CD4-positive, alpha-beta memory T cell (primary cell): ENCODE measurements at regions of chr16 and their contacts with region 1.

Region 1: DNA sequence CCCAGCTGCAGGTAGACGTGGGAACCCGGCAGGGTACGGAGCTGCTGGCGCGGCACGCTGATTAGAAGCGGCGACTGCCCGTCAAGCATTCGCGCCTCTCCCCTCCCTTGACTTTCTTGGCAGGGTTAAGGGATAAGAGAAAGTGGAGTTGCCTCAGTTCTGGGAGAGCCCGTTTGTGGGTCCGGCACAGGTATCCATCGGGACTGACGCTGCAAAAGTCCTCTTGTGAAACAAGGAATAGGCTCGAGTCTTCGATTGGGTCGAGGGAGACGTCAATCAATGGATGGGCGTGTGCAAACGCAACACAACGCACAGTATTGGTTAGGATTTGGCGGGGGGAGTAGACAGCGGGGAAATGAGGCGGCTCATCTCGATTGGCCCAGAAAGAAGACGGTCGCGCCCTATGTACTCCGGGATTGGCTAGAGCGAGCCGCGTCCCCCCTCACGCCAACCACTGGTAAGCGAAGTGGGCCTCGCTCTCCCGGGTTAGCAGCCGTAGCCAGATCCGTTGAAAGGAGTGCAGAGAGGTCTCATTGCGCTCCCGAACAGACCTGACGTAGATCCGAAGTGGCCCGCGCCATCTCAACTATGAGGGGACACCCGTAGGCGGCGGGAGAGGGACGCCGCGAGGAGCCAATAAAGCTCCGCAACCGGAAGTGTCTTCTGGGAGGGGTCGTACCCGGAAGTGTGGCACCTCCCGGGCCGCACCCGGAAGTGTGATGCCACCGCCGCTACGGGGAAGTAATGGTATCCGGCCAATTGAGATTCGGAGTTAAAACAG is at the start of gene MON1B:
- DNase-seq: peak; percentile 97 to 98 (median 98)
- H3K4me3 ChIP-seq: peak within 1 kb of the TSS; percentile 97 to 99
- H3K4me3 Mint-ChIP-seq: peak within 1 kb of the TSS; percentile 94 to 100 (median 98)
- H3K27ac ChIP-seq: peak within 1 kb of the TSS; percentile 93
- H3K27ac Mint-ChIP-seq: peak within 1 kb of the TSS; percentile 98 to 100 (median 99)
- H3K4me1 ChIP-seq: peaks cover 27% of the 10 kb centered on the region
- H3K4me1 Mint-ChIP-seq: peaks cover 31 to 50% (median 38%) of the 10 kb centered on the region in 4 donors
- H3K27me3 ChIP-seq: no peaks in the 10 kb centered on the region
- H3K27me3 Mint-ChIP-seq: no peaks in the 10 kb centered on the region
- total RNA-seq, gene MON1B: 82.4 to 85.4 TPM

Region 2: GRCh38 chr16:75555707-75556430 is 1634.8 kb before region 1 on chr16 and contains the start of gene TMEM231:
- CTCF ChIA-PET with region 1: no interaction called
- POLR2A ChIA-PET with region 1: no interaction called
- intact Hi-C with region 1: loop called (anchors 2 kb)
- DNase-seq: peak; percentile 94 to 98 (median 96)
- H3K4me3 ChIP-seq: peak within 1 kb of the TSS; percentile 75 to 76
- H3K4me3 Mint-ChIP-seq: peak within 1 kb of the TSS; percentile 87 to 95 (median 90)
- H3K27ac ChIP-seq: peak within 1 kb of the TSS; percentile 68
- H3K27ac Mint-ChIP-seq: peak within 1 kb of the TSS; percentile 89 to 98 (median 95)
- H3K4me1 ChIP-seq: peaks cover 15% of the 10 kb centered on the region
- H3K4me1 Mint-ChIP-seq: peaks cover 3 to 16% (median 10%) of the 10 kb centered on the region in 4 donors
- H3K27me3 ChIP-seq: no peaks in the 10 kb centered on the region
- H3K27me3 Mint-ChIP-seq: peaks cover 0 to 1% of the 10 kb centered on the region in 2 donors
- total RNA-seq, gene TMEM231: 2.4 to 2.6 TPM

Region 3: GRCh38 chr16:76900285-76901263 is 290.1 kb before region 1 on chr16:
- CTCF ChIA-PET with region 1: no interaction called
- POLR2A ChIA-PET with region 1: no interaction called
- intact Hi-C with region 1: no loop called
- DNase-seq: no peak
- H3K4me3 ChIP-seq: no peak overlapping the region
- H3K4me3 Mint-ChIP-seq: no peak overlapping the region
- H3K27ac ChIP-seq: no peak overlapping the region
- H3K27ac Mint-ChIP-seq: no peak overlapping the region
- H3K4me1 ChIP-seq: no peaks in the 10 kb centered on the region
- H3K4me1 Mint-ChIP-seq: no peaks in the 10 kb centered on the region
- H3K27me3 ChIP-seq: no peaks in the 10 kb centered on the region
- H3K27me3 Mint-ChIP-seq: no peaks in the 10 kb centered on the region

Region 4: GRCh38 chr16:77211880-77212740 is 21.4 kb after region 1 on chr16:
- CTCF ChIA-PET with region 1: no interaction called
- POLR2A ChIA-PET with region 1: interaction called, 27 read pairs
- intact Hi-C with region 1: loop called (anchors 1 kb)
- DNase-seq: peak; percentile 71 to 86 (median 74)
- H3K4me3 ChIP-seq: peak overlapping the region; percentile 17 to 66
- H3K4me3 Mint-ChIP-seq: peak overlapping the region; percentile 84 to 92 (median 88)
- H3K27ac ChIP-seq: peak overlapping the region; percentile 61
- H3K27ac Mint-ChIP-seq: peak overlapping the region; percentile 78 to 90 (median 88)
- H3K4me1 ChIP-seq: peaks cover 5% of the 10 kb centered on the region
- H3K4me1 Mint-ChIP-seq: peaks cover 8 to 16% (median 13%) of the 10 kb centered on the region in 4 donors
- H3K27me3 ChIP-seq: no peaks in the 10 kb centered on the region
- H3K27me3 Mint-ChIP-seq: no peaks in the 10 kb centered on the region

Region 5: DNA sequence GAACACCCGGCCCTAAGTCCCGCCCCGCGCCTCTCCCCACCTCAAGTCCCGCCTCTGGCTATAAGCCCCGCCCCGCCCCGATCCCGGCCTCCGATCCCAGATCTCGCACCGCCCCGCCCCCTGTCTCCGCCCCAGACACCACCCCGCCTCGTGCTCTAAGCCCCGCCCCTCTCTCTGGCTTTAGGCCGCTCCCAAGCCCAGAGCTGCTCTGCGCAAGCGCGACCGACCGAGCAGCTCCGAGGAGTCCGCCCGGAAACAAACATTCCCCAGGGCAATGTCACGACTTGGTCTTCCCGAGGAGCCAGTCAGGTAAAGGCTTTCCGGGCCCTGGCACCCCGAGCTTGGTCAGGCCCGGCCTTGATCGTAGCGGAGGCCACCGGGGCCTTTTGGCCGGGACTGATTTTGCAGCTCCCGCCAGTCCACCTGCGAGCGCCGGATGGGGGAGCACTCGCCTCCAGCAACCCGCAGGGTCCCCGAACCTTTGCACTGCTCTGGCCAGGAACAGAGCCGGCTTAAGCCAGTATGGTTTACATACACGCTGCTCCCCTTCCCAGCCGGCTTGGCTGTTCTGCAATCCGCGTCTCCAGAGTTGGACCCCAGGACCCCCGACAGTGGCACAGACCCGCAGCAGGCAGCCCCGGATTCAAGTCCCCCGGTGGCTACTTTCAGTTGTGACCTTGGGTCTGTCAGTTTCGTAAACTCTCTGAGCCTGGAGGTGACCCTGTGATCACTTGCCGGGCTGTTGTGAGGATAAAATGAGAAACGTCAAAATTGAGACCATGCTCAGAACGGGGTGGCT is 531.8 kb after region 1 on chr16 and contains the start of gene NUDT7:
- CTCF ChIA-PET with region 1: no interaction called
- POLR2A ChIA-PET with region 1: no interaction called
- intact Hi-C with region 1: loop called (anchors 1 kb)
- DNase-seq: peak; percentile 87 to 91 (median 89)
- H3K4me3 ChIP-seq: peak within 1 kb of the TSS; percentile 55 to 77
- H3K4me3 Mint-ChIP-seq: peak within 1 kb of the TSS; percentile 86 to 94 (median 90)
- H3K27ac ChIP-seq: peak within 1 kb of the TSS; percentile 54
- H3K27ac Mint-ChIP-seq: peak within 1 kb of the TSS; percentile 51 to 94 (median 87)
- H3K4me1 ChIP-seq: peaks cover 12% of the 10 kb centered on the region
- H3K4me1 Mint-ChIP-seq: peaks cover 9 to 17% (median 12%) of the 10 kb centered on the region in 4 donors
- H3K27me3 ChIP-seq: no peaks in the 10 kb centered on the region
- H3K27me3 Mint-ChIP-seq: peaks cover 0 to 2% of the 10 kb centered on the region in 2 donors
- total RNA-seq, gene NUDT7: 9.8 to 11.0 TPM